B cell (primary cell): ENCODE measurements at regions of chr3 and their contacts with region 1.

Region 1: DNA sequence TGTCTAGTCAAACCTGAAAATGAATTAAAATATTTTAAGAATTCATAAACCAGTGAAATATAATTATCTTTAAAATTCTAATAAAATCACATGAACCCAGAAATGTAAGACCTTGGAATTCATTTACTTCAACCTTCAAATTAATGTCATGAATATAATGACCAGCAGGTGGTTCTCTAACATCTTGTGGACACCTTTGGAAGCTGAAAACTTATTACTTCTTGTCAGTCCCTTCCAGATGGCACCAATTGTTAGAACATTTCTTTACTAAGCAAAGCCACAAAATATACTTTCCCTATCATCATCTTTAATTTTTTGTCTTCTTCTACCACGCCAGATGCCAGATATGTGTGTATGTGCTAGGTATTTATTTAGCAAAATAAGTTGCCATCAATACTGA is 240.0 kb downstream of the MBNL1 start:
- DNase-seq: peak; percentile 54
- ATAC-seq: no peak
- H3K4me3 ChIP-seq: no peak overlapping the region
- H3K4me3 Mint-ChIP-seq: peak overlapping the region; percentile 4
- H3K27ac ChIP-seq: peak overlapping the region in 1 of 2 donors; percentile 59
- H3K27ac Mint-ChIP-seq: peak overlapping the region; percentile 54
- H3K4me1 ChIP-seq: peaks cover 40 to 53% of the 10 kb centered on the region in 2 donors
- H3K4me1 Mint-ChIP-seq: peaks cover 71% of the 10 kb centered on the region
- H3K27me3 ChIP-seq: no peaks in the 10 kb centered on the region
- H3K27me3 Mint-ChIP-seq: no peaks in the 10 kb centered on the region
- CTCF ChIP-seq: peak; percentile 70

Region 2: DNA sequence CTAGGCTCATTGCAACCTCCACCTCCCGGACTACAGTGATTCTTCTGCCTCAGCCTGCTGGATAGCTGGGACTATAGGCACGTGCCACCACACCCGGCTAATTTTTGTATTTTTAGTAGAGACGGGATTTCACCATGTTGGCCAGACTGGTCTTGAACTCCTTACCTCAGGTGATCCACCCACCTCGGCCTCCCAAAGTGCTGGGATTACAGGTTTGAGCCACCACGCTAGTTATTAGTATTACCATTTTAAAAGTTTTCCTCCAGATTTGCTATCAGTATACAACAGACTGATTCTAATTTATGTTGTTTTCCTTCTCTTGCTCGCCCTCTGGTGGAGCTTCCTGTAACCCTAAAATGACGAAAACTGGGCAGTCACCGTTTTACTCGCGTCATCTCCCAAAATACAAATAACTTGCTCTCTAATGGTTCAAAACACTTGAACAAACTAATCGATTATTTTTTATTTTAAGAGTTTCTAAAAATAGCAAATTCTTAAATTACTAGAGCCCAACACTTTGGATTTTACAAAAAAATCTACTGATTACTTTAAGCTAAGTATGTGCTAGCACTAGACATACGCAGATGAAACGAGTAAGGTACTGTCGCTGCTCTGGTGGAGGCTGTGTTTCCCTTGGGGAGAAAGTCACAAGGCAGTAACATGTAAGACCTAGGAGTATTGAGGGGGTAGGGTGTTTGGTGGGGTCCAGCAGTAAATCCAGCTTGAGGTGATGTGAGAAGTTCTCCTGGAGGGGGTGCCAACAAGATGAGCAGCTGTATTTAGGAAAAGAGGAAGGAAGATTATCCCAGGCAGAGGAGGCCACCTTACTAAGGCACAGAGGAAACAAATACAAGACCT is 36.7 kb before region 1 on chr3:
- CTCF ChIA-PET with region 1: interaction called, 61 read pairs
- POLR2A ChIA-PET with region 1: no interaction called
- intact Hi-C with region 1: no loop called
- DNase-seq: peak; percentile 86
- ATAC-seq: peak; percentile 82
- H3K4me3 ChIP-seq: peak overlapping the region; percentile 32 to 63 (median 54)
- H3K4me3 Mint-ChIP-seq: peak overlapping the region; percentile 60
- H3K27ac ChIP-seq: peak overlapping the region; percentile 75 to 83
- H3K27ac Mint-ChIP-seq: peak overlapping the region; percentile 84
- H3K4me1 ChIP-seq: peaks cover 12 to 14% of the 10 kb centered on the region in 2 donors
- H3K4me1 Mint-ChIP-seq: peaks cover 21% of the 10 kb centered on the region
- H3K27me3 ChIP-seq: no peaks in the 10 kb centered on the region
- H3K27me3 Mint-ChIP-seq: no peaks in the 10 kb centered on the region
- CTCF ChIP-seq: peak; percentile 89

Region 3: GRCh38 chr3:152497457-152497856 is 11.2 kb before region 1 on chr3:
- CTCF ChIA-PET with region 1: interaction called, 23 read pairs
- POLR2A ChIA-PET with region 1: no interaction called
- intact Hi-C with region 1: loop called (anchors 2 kb)
- DNase-seq: no peak
- ATAC-seq: no peak
- H3K4me3 ChIP-seq: peak overlapping the region in 1 of 5 experiments; percentile 27
- H3K4me3 Mint-ChIP-seq: peak overlapping the region; percentile 62
- H3K27ac ChIP-seq: peak overlapping the region; percentile 45 to 74
- H3K27ac Mint-ChIP-seq: peak overlapping the region; percentile 81
- H3K4me1 ChIP-seq: peaks cover 25 to 35% of the 10 kb centered on the region in 2 donors
- H3K4me1 Mint-ChIP-seq: peaks cover 52% of the 10 kb centered on the region
- H3K27me3 ChIP-seq: no peaks in the 10 kb centered on the region
- H3K27me3 Mint-ChIP-seq: no peaks in the 10 kb centered on the region
- CTCF ChIP-seq: no peak

Region 4: GRCh38 chr3:152524198-152525140 is 15.8 kb after region 1 on chr3:
- CTCF ChIA-PET with region 1: interaction called, 201 read pairs
- POLR2A ChIA-PET with region 1: no interaction called
- intact Hi-C with region 1: loop called (anchors 1 kb)
- DNase-seq: peak; percentile 76
- ATAC-seq: peak; percentile 68
- H3K4me3 ChIP-seq: no peak overlapping the region
- H3K4me3 Mint-ChIP-seq: no peak overlapping the region
- H3K27ac ChIP-seq: no peak overlapping the region
- H3K27ac Mint-ChIP-seq: no peak overlapping the region
- H3K4me1 ChIP-seq: peaks cover 5 to 6% of the 10 kb centered on the region in 2 donors
- H3K4me1 Mint-ChIP-seq: peaks cover 22% of the 10 kb centered on the region
- H3K27me3 ChIP-seq: no peaks in the 10 kb centered on the region
- H3K27me3 Mint-ChIP-seq: no peaks in the 10 kb centered on the region
- CTCF ChIP-seq: peak; percentile 98

Region 5: GRCh38 chr3:152695840-152696239 is 187.1 kb after region 1 on chr3:
- CTCF ChIA-PET with region 1: no interaction called
- POLR2A ChIA-PET with region 1: no interaction called
- intact Hi-C with region 1: loop called (anchors 10 kb)
- DNase-seq: no peak
- ATAC-seq: no peak
- H3K4me3 ChIP-seq: no peak overlapping the region
- H3K4me3 Mint-ChIP-seq: no peak overlapping the region
- H3K27ac ChIP-seq: no peak overlapping the region
- H3K27ac Mint-ChIP-seq: no peak overlapping the region
- H3K4me1 ChIP-seq: no peaks in the 10 kb centered on the region
- H3K4me1 Mint-ChIP-seq: no peaks in the 10 kb centered on the region
- H3K27me3 ChIP-seq: no peaks in the 10 kb centered on the region
- H3K27me3 Mint-ChIP-seq: no peaks in the 10 kb centered on the region
- CTCF ChIP-seq: no peak